Dorsolateral prefrontal cortex (tissue), 120 donors: ENCODE measurements at regions of chr21 and their contacts with region 1.

Region 1: GRCh38 chr21:27802816-27803475 is 836.1 kb upstream of the ADAMTS5 start:
- DNase-seq: peak in 4 of 10 donors; percentile 19 to 43 (median 37)
- H3K4me3 ChIP-seq: peak overlapping the region in 19 of 59 donors; percentile 1 to 40 (median 25)
- H3K27ac ChIP-seq: peak overlapping the region in 53 of 59 donors; percentile 6 to 88 (median 73)
- H3K27me3 ChIP-seq: no peaks in the 10 kb centered on the region
- CTCF ChIP-seq: peak in 55 of 56 donors; percentile 34 to 79 (median 64)

Region 2: GRCh38 chr21:27700974-27701614 is 101.9 kb before region 1 on chr21:
- intact Hi-C with region 1: loop called (anchors 5 to 10 kb)
- DNase-seq: peak; percentile 71 to 90 (median 85)
- H3K4me3 ChIP-seq: peak overlapping the region in 43 of 59 donors; percentile 8 to 57 (median 31)
- H3K27ac ChIP-seq: peak overlapping the region in 9 of 59 donors; percentile 9 to 71 (median 39)
- H3K27me3 ChIP-seq: peaks cover 0 to 5% (median 0%) of the 10 kb centered on the region in 45 donors
- CTCF ChIP-seq: peak; percentile 73 to 100 (median 97)